B cell (primary cell): ENCODE measurements at regions of chr22 and their contacts with region 1.

Region 1: GRCh38 chr22:21641789-21642583 is at the start of gene SDF2L1:
- DNase-seq: peak; percentile 98
- ATAC-seq: peak; percentile 96
- H3K4me3 ChIP-seq: peak within 1 kb of the TSS; percentile 50 to 93 (median 75)
- H3K4me3 Mint-ChIP-seq: peak within 1 kb of the TSS; percentile 82
- H3K27ac ChIP-seq: peak within 1 kb of the TSS; percentile 41 to 84
- H3K27ac Mint-ChIP-seq: peak within 1 kb of the TSS; percentile 78
- H3K4me1 ChIP-seq: peaks cover 12 to 27% of the 10 kb centered on the region in 2 donors
- H3K4me1 Mint-ChIP-seq: peaks cover 26% of the 10 kb centered on the region
- H3K27me3 ChIP-seq: no peaks in the 10 kb centered on the region
- H3K27me3 Mint-ChIP-seq: no peaks in the 10 kb centered on the region
- CTCF ChIP-seq: no peak
- total RNA-seq, gene SDF2L1: 10.6 and 15.2 TPM in 2 replicates

Region 2: GRCh38 chr22:20916983-20917810 is 724.8 kb before region 1 on chr22 and contains the start of gene CRKL:
- CTCF ChIA-PET with region 1: no interaction called
- POLR2A ChIA-PET with region 1: no interaction called
- intact Hi-C with region 1: loop called (anchors 1 kb)
- DNase-seq: peak; percentile 98
- ATAC-seq: peak; percentile 97
- H3K4me3 ChIP-seq: peak within 1 kb of the TSS; percentile 84 to 96 (median 94)
- H3K4me3 Mint-ChIP-seq: peak within 1 kb of the TSS; percentile 95
- H3K27ac ChIP-seq: peak within 1 kb of the TSS; percentile 59 to 92
- H3K27ac Mint-ChIP-seq: peak within 1 kb of the TSS; percentile 88
- H3K4me1 ChIP-seq: peaks cover 23 to 33% of the 10 kb centered on the region in 2 donors
- H3K4me1 Mint-ChIP-seq: peaks cover 39% of the 10 kb centered on the region
- H3K27me3 ChIP-seq: no peaks in the 10 kb centered on the region
- H3K27me3 Mint-ChIP-seq: no peaks in the 10 kb centered on the region
- CTCF ChIP-seq: peak; percentile 88
- total RNA-seq, gene CRKL: 75.3 and 76.7 TPM in 2 replicates

Region 3: DNA sequence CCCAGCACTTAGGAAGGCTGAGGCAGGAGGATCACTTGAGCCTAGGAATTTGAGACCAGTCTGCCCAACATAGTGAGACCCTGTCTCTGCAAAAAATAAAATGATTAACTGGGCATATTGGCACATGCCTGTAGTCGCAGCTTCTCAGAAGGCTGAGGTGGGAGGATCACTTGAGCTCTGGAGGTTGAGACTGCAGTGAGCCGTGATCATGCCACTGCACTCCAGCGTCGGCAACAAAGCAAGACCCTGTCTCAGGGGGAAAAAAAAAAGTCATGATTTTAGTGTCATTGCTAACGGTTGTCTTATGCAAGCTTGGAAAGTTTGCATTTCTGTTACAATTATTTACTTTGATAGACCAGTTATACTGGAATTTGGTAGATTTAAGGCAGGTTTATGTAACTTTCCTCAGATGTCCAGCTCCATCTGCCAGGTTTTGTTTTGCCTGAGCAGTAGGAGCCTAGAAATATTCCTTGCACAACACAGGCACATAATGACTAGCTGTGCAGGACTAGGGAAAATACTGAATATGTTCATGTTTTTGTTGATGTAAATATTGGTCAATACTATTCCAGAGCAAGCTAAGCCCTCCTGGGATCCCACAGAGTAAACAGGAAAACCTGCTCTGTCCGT is 62.4 kb before region 1 on chr22:
- CTCF ChIA-PET with region 1: no interaction called
- POLR2A ChIA-PET with region 1: no interaction called
- intact Hi-C with region 1: no loop called
- DNase-seq: no peak
- ATAC-seq: no peak
- H3K4me3 ChIP-seq: no peak overlapping the region
- H3K4me3 Mint-ChIP-seq: no peak overlapping the region
- H3K27ac ChIP-seq: no peak overlapping the region
- H3K27ac Mint-ChIP-seq: peak overlapping the region; percentile 7
- H3K4me1 ChIP-seq: peaks cover 8 to 28% of the 10 kb centered on the region in 2 donors
- H3K4me1 Mint-ChIP-seq: peaks cover 46% of the 10 kb centered on the region
- H3K27me3 ChIP-seq: no peaks in the 10 kb centered on the region
- H3K27me3 Mint-ChIP-seq: no peaks in the 10 kb centered on the region
- CTCF ChIP-seq: no peak

Region 4: GRCh38 chr22:21612865-21613265 is 29.1 kb before region 1 on chr22:
- CTCF ChIA-PET with region 1: interaction called, 11 read pairs
- POLR2A ChIA-PET with region 1: interaction called, 10 read pairs
- intact Hi-C with region 1: no loop called
- DNase-seq: no peak
- ATAC-seq: no peak
- H3K4me3 ChIP-seq: no peak overlapping the region
- H3K4me3 Mint-ChIP-seq: no peak overlapping the region
- H3K27ac ChIP-seq: no peak overlapping the region
- H3K27ac Mint-ChIP-seq: peak overlapping the region; percentile 26
- H3K4me1 ChIP-seq: peaks cover 12 to 33% of the 10 kb centered on the region in 2 donors
- H3K4me1 Mint-ChIP-seq: peaks cover 41% of the 10 kb centered on the region
- H3K27me3 ChIP-seq: no peaks in the 10 kb centered on the region
- H3K27me3 Mint-ChIP-seq: no peaks in the 10 kb centered on the region
- CTCF ChIP-seq: no peak

Region 5: DNA sequence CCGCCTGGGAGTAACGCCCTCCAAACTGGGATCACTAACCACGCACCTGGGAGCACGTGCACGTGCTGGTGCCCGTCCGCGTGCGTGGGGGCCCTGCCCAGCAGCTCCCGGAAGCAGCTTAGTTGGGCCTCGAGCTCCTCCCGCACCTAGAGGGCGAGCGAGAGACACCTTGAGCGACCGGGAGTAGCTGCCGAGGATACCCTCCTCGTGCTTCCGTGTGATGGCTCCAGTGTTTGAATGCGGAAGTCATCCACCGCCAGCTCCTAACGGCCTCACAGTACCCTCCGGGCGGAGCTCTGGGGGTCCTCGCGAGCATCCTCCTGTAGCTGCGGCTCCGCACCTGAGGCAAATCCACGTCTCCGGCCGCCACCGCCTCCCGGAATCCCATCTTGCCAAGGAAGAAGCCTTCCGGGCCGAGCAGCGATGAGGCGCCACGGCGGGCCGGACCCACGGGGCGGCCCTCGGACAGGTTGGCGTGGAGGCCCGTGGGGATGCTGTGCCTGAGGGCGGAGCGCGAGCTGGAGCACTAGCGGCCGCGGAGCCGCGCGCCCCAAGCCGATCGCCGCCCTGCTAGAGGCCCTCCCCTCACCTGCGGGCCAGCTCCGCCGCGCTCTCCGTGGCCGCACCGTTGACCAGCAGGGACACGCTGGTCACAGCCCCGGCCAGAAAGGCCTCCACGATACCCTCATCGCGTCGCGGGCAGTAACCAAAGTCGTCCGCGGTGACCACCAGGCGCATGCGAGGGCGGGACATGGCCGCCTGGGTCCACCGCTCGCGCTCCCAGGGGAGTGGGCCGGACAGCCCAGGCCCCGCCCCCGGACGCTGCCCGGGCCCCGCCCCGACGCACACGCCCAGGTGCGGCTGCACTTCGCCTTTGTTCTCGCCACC is 12.5 kb before region 1 on chr22 and contains the start of gene YDJC:
- CTCF ChIA-PET with region 1: interaction called, 168 read pairs
- POLR2A ChIA-PET with region 1: interaction called, 16 read pairs
- intact Hi-C with region 1: loop called (anchors 1 kb)
- DNase-seq: peak; percentile 96
- ATAC-seq: peak; percentile 86
- H3K4me3 ChIP-seq: peak within 1 kb of the TSS; percentile 6 to 100 (median 99)
- H3K4me3 Mint-ChIP-seq: peak within 1 kb of the TSS; percentile 94
- H3K27ac ChIP-seq: peak within 1 kb of the TSS; percentile 91 to 92
- H3K27ac Mint-ChIP-seq: peak within 1 kb of the TSS; percentile 94
- H3K4me1 ChIP-seq: peaks cover 23 to 40% of the 10 kb centered on the region in 2 donors
- H3K4me1 Mint-ChIP-seq: peaks cover 46% of the 10 kb centered on the region
- H3K27me3 ChIP-seq: no peaks in the 10 kb centered on the region
- H3K27me3 Mint-ChIP-seq: no peaks in the 10 kb centered on the region
- CTCF ChIP-seq: peak; percentile 61
- total RNA-seq, gene YDJC: 46.6 and 48.8 TPM in 2 replicates

Region 6: GRCh38 chr22:21666786-21667185 is 24.8 kb after region 1 on chr22:
- CTCF ChIA-PET with region 1: interaction called, 6 read pairs
- POLR2A ChIA-PET with region 1: interaction called, 3 read pairs
- intact Hi-C with region 1: loop called (anchors 1 kb)
- DNase-seq: no peak
- ATAC-seq: no peak
- H3K4me3 ChIP-seq: peak overlapping the region in 4 of 5 experiments; percentile 77 to 96 (median 90)
- H3K4me3 Mint-ChIP-seq: peak overlapping the region; percentile 96
- H3K27ac ChIP-seq: peak overlapping the region in 1 of 2 donors; percentile 92
- H3K27ac Mint-ChIP-seq: peak overlapping the region; percentile 69
- H3K4me1 ChIP-seq: peaks cover 8 to 17% of the 10 kb centered on the region in 2 donors
- H3K4me1 Mint-ChIP-seq: peaks cover 28% of the 10 kb centered on the region
- H3K27me3 ChIP-seq: no peaks in the 10 kb centered on the region
- H3K27me3 Mint-ChIP-seq: no peaks in the 10 kb centered on the region
- CTCF ChIP-seq: no peak